OCI-LY7 (cell line): ENCODE measurements at regions of chr1 and their contacts with region 1.

Region 1: DNA sequence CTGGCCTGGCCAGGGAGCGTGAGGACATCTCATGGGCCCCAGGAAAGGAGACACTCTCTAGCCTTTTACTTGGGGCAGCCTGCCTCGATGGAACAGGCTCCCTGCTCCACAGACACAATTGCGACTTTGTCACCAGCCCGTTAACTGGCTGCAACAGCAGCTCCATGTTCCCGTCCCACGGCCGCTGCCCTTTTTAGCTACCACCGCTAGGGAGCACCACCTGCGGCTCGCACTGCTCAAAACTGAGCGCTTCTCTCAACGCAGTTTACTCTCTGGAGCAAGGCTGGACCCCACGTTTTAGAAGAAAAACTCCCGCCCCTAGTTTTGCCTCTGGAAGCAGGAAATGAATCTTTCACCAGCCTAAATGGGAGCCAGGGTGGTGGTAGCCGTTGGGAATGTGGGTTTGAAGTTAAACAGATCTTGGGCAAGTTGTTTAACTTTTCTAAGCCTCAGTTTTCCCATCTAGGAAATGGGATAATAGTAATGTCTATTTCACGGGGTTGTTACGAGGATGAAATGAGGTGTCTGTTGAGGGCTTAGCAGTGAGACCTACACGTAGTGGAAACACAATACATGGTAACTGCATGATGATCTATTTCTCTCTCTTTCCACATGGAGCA is 3.5 kb upstream of the LRRC38 start:
- DNase-seq: peak; percentile 38
- H3K4me3 ChIP-seq: no peak overlapping the region
- H3K27ac ChIP-seq: no peak overlapping the region
- H3K4me1 ChIP-seq: no peaks in the 10 kb centered on the region
- CTCF ChIP-seq: peak; percentile 71

Region 2: GRCh38 chr1:13451399-13451965 is 65.8 kb before region 1 on chr1:
- CTCF ChIA-PET with region 1: no interaction called
- POLR2A ChIA-PET with region 1: no interaction called
- intact Hi-C with region 1: no loop called
- DNase-seq: no peak
- H3K4me3 ChIP-seq: no peak overlapping the region
- H3K27ac ChIP-seq: no peak overlapping the region
- H3K4me1 ChIP-seq: no peaks in the 10 kb centered on the region
- CTCF ChIP-seq: no peak

Region 3: GRCh38 chr1:13651279-13651678 is 134.0 kb after region 1 on chr1:
- CTCF ChIA-PET with region 1: no interaction called
- POLR2A ChIA-PET with region 1: no interaction called
- intact Hi-C with region 1: no loop called
- DNase-seq: no peak
- H3K4me3 ChIP-seq: no peak overlapping the region
- H3K27ac ChIP-seq: no peak overlapping the region
- H3K4me1 ChIP-seq: no peaks in the 10 kb centered on the region
- CTCF ChIP-seq: no peak

Region 4: DNA sequence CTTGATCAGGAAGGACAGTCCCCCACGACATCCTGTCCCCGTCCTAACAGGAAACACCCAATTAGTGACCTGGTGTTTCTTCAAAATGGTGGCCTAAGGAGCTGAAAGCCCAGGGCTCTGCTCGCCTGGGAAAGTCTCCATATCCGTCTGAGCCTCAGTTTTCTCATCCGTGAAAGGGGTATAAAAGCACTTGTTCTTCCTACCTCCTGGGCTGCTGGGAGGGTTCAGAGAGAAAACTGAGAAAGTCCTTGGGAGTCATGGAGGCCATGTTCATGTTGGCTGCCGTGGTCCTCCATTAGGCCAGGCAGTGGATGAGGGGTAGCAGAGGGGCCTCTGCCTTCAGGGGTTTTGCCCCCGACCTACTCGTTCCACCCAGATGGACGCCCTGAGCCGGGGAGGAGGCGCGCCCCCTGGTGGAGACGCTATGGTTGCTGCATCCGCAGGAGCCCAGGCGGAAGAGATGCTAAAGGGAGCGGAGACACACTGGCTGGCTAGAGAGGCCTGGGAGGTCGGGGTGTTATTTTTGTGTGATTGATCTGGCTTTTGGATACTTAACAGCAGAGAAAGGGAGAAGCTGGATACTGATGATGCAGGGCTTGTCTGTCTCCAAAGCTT is 296.2 kb after region 1 on chr1:
- CTCF ChIA-PET with region 1: no interaction called
- POLR2A ChIA-PET with region 1: no interaction called
- intact Hi-C with region 1: loop called (anchors 5 kb)
- DNase-seq: peak; percentile 71
- H3K4me3 ChIP-seq: no peak overlapping the region
- H3K27ac ChIP-seq: no peak overlapping the region
- H3K4me1 ChIP-seq: peaks cover 11% of the 10 kb centered on the region
- CTCF ChIP-seq: peak; percentile 89

Region 5: DNA sequence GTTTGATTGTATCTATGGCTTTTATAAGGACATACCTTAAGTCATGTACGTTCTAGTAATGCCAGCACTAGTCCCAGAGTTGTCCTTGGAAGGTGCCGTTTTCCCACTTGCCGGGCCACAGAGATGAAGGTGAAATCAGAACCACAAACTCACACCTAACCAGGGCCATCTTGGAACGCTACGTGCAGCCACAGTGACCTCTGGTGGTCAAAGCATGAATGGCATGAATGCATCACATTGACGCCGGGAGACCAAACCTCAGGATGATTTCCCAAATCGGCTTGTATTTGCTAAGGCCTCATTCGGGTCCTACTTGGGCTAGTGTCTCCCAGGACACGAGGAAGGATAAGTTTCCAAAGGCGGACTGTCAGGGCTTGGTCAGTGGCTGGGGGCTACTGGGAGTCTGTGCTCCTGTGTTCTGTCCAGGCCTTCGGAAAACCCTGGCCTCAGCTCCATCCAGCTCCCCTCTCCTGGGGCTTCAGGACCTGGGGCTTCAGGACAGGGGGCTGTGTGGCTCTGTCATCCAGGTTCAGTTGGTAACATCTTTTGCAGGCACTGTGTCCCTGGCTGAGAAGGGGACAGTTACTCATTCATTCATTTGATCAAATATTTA is 443.2 kb after region 1 on chr1:
- CTCF ChIA-PET with region 1: no interaction called
- POLR2A ChIA-PET with region 1: no interaction called
- intact Hi-C with region 1: loop called (anchors 10 kb)
- DNase-seq: peak; percentile 67
- H3K4me3 ChIP-seq: no peak overlapping the region
- H3K27ac ChIP-seq: no peak overlapping the region
- H3K4me1 ChIP-seq: no peaks in the 10 kb centered on the region
- CTCF ChIP-seq: peak; percentile 96